ENCODE measurements at regions of chr19 and their contacts with region 1.

Region 1: GRCh38 chr19:19185853-19186740 is 5.9 kb downstream of the BORCS8 start:
- DNase-seq: peak; percentile 68
- H3K4me3 Mint-ChIP-seq: no peak overlapping the region
- H3K27ac Mint-ChIP-seq: peak overlapping the region; percentile 34
- H3K4me1 Mint-ChIP-seq: peaks cover 33% of the 10 kb centered on the region
- H3K27me3 Mint-ChIP-seq: no peaks in the 10 kb centered on the region

Region 2: DNA sequence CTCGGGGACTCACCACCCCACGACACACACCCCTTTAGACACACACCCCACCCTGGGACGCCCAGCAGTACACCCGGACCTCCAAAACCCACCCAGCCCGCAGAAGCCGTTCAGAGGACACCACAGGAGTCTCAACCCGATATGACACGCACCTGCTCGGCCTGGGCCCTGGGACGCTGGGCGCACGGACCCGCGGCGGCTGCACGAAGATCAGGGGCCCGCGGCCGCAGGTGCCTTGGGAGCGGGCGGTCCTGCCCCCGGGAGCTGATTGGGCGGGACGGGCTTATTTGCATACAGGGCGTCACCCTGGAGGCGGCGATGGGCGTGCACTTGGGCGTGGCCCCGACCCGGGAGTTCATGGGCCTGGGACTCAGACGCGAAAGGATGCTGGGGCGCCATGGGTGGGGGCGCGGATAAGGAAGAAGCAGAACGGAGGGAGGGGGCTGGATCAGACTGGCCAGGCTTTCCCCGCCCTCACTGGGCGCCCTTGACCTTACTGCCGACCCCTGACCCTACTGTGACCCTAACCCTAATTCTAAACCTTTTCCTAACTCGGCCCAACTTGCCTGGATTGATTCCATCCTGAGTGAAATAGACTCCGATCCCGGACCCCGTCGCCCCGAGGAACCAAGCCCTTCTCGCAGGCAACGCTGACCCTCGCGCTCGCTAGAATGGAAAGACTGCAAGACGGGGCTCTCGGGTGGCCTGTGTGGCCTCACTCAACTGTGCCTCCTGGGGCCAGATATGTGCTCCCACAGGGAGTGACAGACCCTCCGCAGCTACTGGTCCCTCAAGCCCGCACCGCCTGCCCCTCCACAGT is 15.8 kb before region 1 on chr19 and contains the start of gene MEF2B:
- CTCF ChIA-PET with region 1: interaction called, 11 read pairs
- intact Hi-C with region 1: no loop called
- DNase-seq: peak; percentile 74
- H3K4me3 Mint-ChIP-seq: peak within 1 kb of the TSS; percentile 28
- H3K27ac Mint-ChIP-seq: no peak within 1 kb of the TSS
- H3K4me1 Mint-ChIP-seq: peaks cover 11% of the 10 kb centered on the region
- H3K27me3 Mint-ChIP-seq: no peaks in the 10 kb centered on the region
- total RNA-seq, gene MEF2B: 3.1 to 4.6 TPM

Region 3: GRCh38 chr19:19224852-19225494 is 38.9 kb after region 1 on chr19:
- CTCF ChIA-PET with region 1: interaction called, 3 read pairs
- intact Hi-C with region 1: loop called (anchors 1 kb)
- DNase-seq: peak; percentile 81
- H3K4me3 Mint-ChIP-seq: peak overlapping the region; percentile 56
- H3K27ac Mint-ChIP-seq: no peak overlapping the region
- H3K4me1 Mint-ChIP-seq: peaks cover 2% of the 10 kb centered on the region
- H3K27me3 Mint-ChIP-seq: peaks cover 12% of the 10 kb centered on the region

Region 4: GRCh38 chr19:19361075-19361594 is 175.0 kb after region 1 on chr19:
- CTCF ChIA-PET with region 1: no interaction called
- intact Hi-C with region 1: loop called (anchors 1 kb)
- DNase-seq: peak; percentile 92
- H3K4me3 Mint-ChIP-seq: no peak overlapping the region
- H3K27ac Mint-ChIP-seq: no peak overlapping the region
- H3K4me1 Mint-ChIP-seq: peaks cover 27% of the 10 kb centered on the region
- H3K27me3 Mint-ChIP-seq: no peaks in the 10 kb centered on the region

Measured in activated naive CD4-positive, alpha-beta T cell treated with anti-CD3 and anti-CD28 coated beads for 36 hours (primary cell).